HepG2 (cell line): ENCODE measurements at regions of chr11 and their contacts with region 1.

Region 1: GRCh38 chr11:33742249-33742851 is 6.1 kb upstream of the CD59 start:
- DNase-seq: no peak
- ATAC-seq: 0 out of 3 replicates have a peak, but pooled peaks have one; percentile 25
- H3K4me3 ChIP-seq: no peak overlapping the region
- H3K27ac ChIP-seq: no peak overlapping the region
- H3K4me1 ChIP-seq: peaks cover 27% of the 10 kb centered on the region
- H3K27me3 ChIP-seq: no peaks in the 10 kb centered on the region
- CTCF ChIP-seq: peak; percentile 20
- EP300 ChIP-seq: no peak
- POLR2A ChIP-seq: no peak
- RAD21 ChIP-seq: no peak

Region 2: GRCh38 chr11:33362051-33362910 is 380.1 kb before region 1 on chr11:
- CTCF ChIA-PET with region 1: interaction called, 5 read pairs
- POLR2A ChIA-PET with region 1: no interaction called
- in situ Hi-C with region 1: no loop called
- intact Hi-C with region 1: loop called (anchors 1 kb)
- DNase-seq: peak; percentile 27
- ATAC-seq: peak; percentile 67
- H3K4me3 ChIP-seq: no peak overlapping the region
- H3K27ac ChIP-seq: no peak overlapping the region
- H3K4me1 ChIP-seq: no peaks in the 10 kb centered on the region
- H3K27me3 ChIP-seq: no peaks in the 10 kb centered on the region
- CTCF ChIP-seq: peak; percentile 51
- EP300 ChIP-seq: no peak
- POLR2A ChIP-seq: no peak
- RAD21 ChIP-seq: 0 out of 2 replicates have a peak, but pooled peaks have one; percentile 38

Region 3: GRCh38 chr11:33542921-33543320 is 199.4 kb before region 1 on chr11:
- CTCF ChIA-PET with region 1: interaction called, 4 read pairs
- POLR2A ChIA-PET with region 1: no interaction called
- in situ Hi-C with region 1: no loop called
- intact Hi-C with region 1: loop called (anchors 1 kb)
- DNase-seq: peak; percentile 23
- ATAC-seq: peak; percentile 84
- H3K4me3 ChIP-seq: no peak overlapping the region
- H3K27ac ChIP-seq: no peak overlapping the region
- H3K4me1 ChIP-seq: no peaks in the 10 kb centered on the region
- H3K27me3 ChIP-seq: peaks cover 0 to 40% of the 10 kb centered on the region in 2 experiments; a peak in 3 of 5 replicates
- CTCF ChIP-seq: peak; percentile 68
- EP300 ChIP-seq: no peak
- POLR2A ChIP-seq: no peak
- RAD21 ChIP-seq: 0 out of 2 replicates have a peak, but pooled peaks have one; percentile 20

Region 4: DNA sequence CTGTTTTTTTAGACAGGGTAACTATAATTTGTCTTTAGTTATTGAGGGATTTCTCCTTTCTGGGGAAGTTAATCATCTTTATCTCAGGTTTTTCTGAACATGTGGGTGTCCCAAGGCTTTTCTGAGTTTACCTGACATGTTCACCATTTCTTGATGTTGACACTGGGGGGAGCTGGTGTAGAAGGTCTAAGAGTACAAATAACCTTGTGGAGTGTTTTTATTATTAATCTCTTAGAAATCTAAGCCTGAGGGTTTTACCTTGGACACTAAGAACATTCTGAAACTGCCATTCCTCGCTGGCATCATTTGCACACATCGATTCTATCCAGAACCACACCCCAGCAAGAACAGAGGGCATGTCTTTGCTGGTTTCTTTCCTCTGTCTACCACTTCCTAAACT is 26.1 kb before region 1 on chr11:
- CTCF ChIA-PET with region 1: interaction called, 4 read pairs
- POLR2A ChIA-PET with region 1: no interaction called
- in situ Hi-C with region 1: no loop called
- intact Hi-C with region 1: loop called (anchors 1 kb)
- DNase-seq: no peak
- ATAC-seq: peak; percentile 53
- H3K4me3 ChIP-seq: no peak overlapping the region
- H3K27ac ChIP-seq: no peak overlapping the region
- H3K4me1 ChIP-seq: peaks cover 15% of the 10 kb centered on the region
- H3K27me3 ChIP-seq: no peaks in the 10 kb centered on the region
- CTCF ChIP-seq: peak; percentile 44
- EP300 ChIP-seq: no peak
- POLR2A ChIP-seq: no peak
- RAD21 ChIP-seq: no peak